ENCODE measurements at regions of chr14 and their contacts with region 1.

Region 1: DNA sequence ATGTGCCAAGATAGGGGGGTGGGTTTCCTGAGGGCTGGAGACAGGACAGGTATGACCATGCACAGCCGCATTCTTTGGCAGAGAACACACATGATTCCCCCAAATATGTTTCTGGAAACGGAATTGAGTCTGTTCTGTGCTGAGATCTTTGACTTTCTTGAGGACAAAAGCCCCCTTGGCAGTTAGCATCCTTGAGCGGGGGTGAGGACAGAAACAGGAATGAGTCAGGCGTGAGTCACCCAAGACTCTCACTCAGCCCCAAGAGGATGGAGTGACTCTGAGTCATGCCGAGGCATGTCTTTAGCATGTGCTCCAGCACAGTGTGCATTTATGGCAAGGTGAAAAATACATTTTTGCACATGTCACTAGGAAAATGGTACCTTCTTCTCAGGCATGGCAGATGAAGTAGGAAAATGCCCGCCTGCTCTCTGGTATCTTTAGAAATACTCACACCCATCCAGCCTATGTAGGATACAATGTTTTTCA is 52.1 kb downstream of the DAD1 start:
- DNase-seq: peak in 8 of 9 experiments; percentile 65 to 93 (median 82)
- ATAC-seq: peak; percentile 86
- H3K4me3 ChIP-seq: peak overlapping the region; percentile 38
- H3K4me3 Mint-ChIP-seq: peak overlapping the region; percentile 76
- H3K27ac ChIP-seq: peak overlapping the region; percentile 50 to 83
- H3K27ac Mint-ChIP-seq: peak overlapping the region; percentile 93
- H3K4me1 ChIP-seq: peaks cover 98% of the 10 kb centered on the region
- H3K4me1 Mint-ChIP-seq: peaks cover 96% of the 10 kb centered on the region
- H3K27me3 ChIP-seq: no peaks in the 10 kb centered on the region
- H3K27me3 Mint-ChIP-seq: no peaks in the 10 kb centered on the region
- CTCF ChIP-seq: no peak

Region 2: DNA sequence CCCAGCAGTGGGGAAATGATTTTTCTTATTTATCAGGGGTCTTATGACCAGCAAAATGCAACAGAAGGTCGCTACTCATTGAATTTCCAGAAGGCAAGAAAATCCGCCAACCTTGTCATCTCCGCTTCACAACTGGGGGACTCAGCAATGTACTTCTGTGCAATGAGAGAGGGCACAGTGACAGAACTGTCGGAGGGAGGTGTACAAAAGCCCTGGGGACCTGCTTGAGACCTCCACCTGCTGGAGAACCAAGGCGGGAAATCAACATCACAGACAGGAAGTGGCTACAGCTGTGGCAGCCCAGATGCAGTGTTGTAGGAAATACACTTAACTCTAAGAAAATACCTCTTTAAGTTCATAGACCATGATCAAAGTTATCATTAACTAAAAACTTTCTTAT is 612.4 kb before region 1 on chr14:
- CTCF ChIA-PET with region 1: no interaction called
- POLR2A ChIA-PET with region 1: interaction called, 3 read pairs
- intact Hi-C with region 1: loop called in 1 of 2 experiments (anchors 5 kb)
- DNase-seq: peak; percentile 31 to 88 (median 69)
- ATAC-seq: peak; percentile 83
- H3K4me3 ChIP-seq: peak overlapping the region; percentile 16 to 33
- H3K4me3 Mint-ChIP-seq: peak overlapping the region; percentile 74
- H3K27ac ChIP-seq: peak overlapping the region; percentile 22 to 48
- H3K27ac Mint-ChIP-seq: peak overlapping the region; percentile 91
- H3K4me1 ChIP-seq: peaks cover 46% of the 10 kb centered on the region
- H3K4me1 Mint-ChIP-seq: peaks cover 58% of the 10 kb centered on the region
- H3K27me3 ChIP-seq: no peaks in the 10 kb centered on the region
- H3K27me3 Mint-ChIP-seq: no peaks in the 10 kb centered on the region
- CTCF ChIP-seq: peak; percentile 38

Region 3: DNA sequence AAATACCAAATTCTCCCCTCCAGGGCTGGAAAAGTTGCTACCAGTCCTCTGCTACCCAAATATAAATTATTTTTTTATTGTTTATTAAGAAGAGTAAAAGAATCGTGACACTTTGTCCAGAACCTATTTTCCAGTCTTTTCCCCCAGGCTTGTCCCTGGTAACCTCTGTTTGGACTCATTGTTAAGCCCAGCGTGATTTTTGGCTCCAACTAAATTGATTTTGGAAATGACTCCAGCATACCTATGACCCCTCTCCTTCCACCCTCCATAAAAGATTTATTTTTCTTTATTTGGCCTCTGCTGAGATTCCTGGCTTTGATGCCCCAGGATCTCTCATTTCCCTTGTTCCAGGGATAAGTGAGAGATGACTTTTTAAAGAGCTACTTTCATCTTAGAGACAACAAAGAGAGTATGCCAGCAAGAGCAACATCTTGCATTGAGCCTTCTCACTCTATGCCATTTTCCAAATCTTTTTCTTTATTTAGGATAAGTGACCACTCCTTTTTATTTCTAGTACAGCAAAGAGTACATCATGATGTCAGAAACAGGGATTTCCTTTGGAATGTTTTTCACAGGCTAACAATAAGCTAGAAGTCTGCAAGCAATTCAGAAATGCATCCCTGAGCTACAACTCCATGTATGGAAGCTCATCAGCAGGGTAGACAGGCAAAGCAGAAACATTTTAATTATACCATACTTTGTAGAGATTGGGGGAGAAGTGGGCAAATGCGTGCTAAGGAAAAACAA is 23.7 kb before region 1 on chr14:
- CTCF ChIA-PET with region 1: interaction called, 47 read pairs
- POLR2A ChIA-PET with region 1: interaction called, 274 read pairs
- intact Hi-C with region 1: no loop called
- DNase-seq: no peak
- ATAC-seq: no peak
- H3K4me3 ChIP-seq: peak overlapping the region; percentile 41 to 53
- H3K4me3 Mint-ChIP-seq: peak overlapping the region; percentile 81
- H3K27ac ChIP-seq: peak overlapping the region; percentile 43 to 82
- H3K27ac Mint-ChIP-seq: peak overlapping the region; percentile 99
- H3K4me1 ChIP-seq: peaks cover 95% of the 10 kb centered on the region
- H3K4me1 Mint-ChIP-seq: peaks cover 89% of the 10 kb centered on the region
- H3K27me3 ChIP-seq: no peaks in the 10 kb centered on the region
- H3K27me3 Mint-ChIP-seq: no peaks in the 10 kb centered on the region
- CTCF ChIP-seq: no peak

Region 4: DNA sequence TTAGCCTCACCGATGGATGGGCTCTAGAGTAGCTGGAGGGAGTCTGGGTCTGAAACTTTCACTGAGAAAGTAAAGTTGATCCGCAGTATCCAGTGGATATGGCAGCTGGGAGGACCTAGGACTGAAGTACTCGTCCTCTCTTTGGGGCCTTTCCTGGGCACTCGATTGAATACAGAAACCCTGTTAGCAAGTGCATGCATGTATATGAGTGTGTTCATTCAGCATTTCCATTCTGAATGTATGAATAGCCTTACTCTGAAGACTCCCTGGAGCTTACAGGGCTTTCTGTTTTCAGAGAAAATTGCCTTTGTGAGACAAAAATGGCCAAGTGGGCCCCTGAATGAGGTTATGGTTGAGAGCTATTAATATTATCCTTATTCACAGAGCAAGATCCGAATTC is 10.7 kb before region 1 on chr14:
- CTCF ChIA-PET with region 1: interaction called, 21 read pairs
- POLR2A ChIA-PET with region 1: interaction called, 155 read pairs
- intact Hi-C with region 1: loop called in 1 of 2 experiments (anchors 1 kb)
- DNase-seq: no peak
- ATAC-seq: no peak
- H3K4me3 ChIP-seq: peak overlapping the region; percentile 47 to 61
- H3K4me3 Mint-ChIP-seq: peak overlapping the region; percentile 86
- H3K27ac ChIP-seq: peak overlapping the region; percentile 27 to 86
- H3K27ac Mint-ChIP-seq: peak overlapping the region; percentile 99
- H3K4me1 ChIP-seq: peaks cover 90% of the 10 kb centered on the region
- H3K4me1 Mint-ChIP-seq: peaks cover 89% of the 10 kb centered on the region
- H3K27me3 ChIP-seq: no peaks in the 10 kb centered on the region
- H3K27me3 Mint-ChIP-seq: no peaks in the 10 kb centered on the region
- CTCF ChIP-seq: no peak

Measured in CD8-positive, alpha-beta T cell (primary cell).